ENCODE measurements at regions of chr2 and their contacts with region 1.

Region 1: GRCh38 chr2:101113396-101114267 is 37.5 kb downstream of the TBC1D8 start:
- DNase-seq: peak; percentile 50 to 63 (median 63)
- H3K4me3 ChIP-seq: peak overlapping the region in 1 of 3 experiments; percentile 22
- H3K4me3 Mint-ChIP-seq: peak overlapping the region in 1 of 2 donors; percentile 31
- H3K27ac ChIP-seq: peak overlapping the region; percentile 15 to 85
- H3K27ac Mint-ChIP-seq: peak overlapping the region; percentile 76 to 97 (median 91)
- H3K4me1 ChIP-seq: peaks cover 67 to 74% of the 10 kb centered on the region in 2 donors
- H3K4me1 Mint-ChIP-seq: peaks cover 76% of the 10 kb centered on the region
- H3K27me3 ChIP-seq: no peaks in the 10 kb centered on the region
- H3K27me3 Mint-ChIP-seq: no peaks in the 10 kb centered on the region
- CTCF ChIP-seq: no peak

Region 2: GRCh38 chr2:101173707-101174295 is 60.2 kb after region 1 on chr2:
- intact Hi-C with region 1: no loop called
- DNase-seq: peak; percentile 89 to 97 (median 95)
- H3K4me3 ChIP-seq: peak overlapping the region in 1 of 3 experiments; percentile 52
- H3K4me3 Mint-ChIP-seq: peak overlapping the region in 1 of 2 donors; percentile 73
- H3K27ac ChIP-seq: peak overlapping the region; percentile 80 to 84
- H3K27ac Mint-ChIP-seq: peak overlapping the region; percentile 75 to 94 (median 87)
- H3K4me1 ChIP-seq: peaks cover 66 to 75% of the 10 kb centered on the region in 2 donors
- H3K4me1 Mint-ChIP-seq: peaks cover 73% of the 10 kb centered on the region
- H3K27me3 ChIP-seq: no peaks in the 10 kb centered on the region
- H3K27me3 Mint-ChIP-seq: peaks cover 0 to 2% (median 0%) of the 10 kb centered on the region in 3 donors
- CTCF ChIP-seq: no peak

Region 3: DNA sequence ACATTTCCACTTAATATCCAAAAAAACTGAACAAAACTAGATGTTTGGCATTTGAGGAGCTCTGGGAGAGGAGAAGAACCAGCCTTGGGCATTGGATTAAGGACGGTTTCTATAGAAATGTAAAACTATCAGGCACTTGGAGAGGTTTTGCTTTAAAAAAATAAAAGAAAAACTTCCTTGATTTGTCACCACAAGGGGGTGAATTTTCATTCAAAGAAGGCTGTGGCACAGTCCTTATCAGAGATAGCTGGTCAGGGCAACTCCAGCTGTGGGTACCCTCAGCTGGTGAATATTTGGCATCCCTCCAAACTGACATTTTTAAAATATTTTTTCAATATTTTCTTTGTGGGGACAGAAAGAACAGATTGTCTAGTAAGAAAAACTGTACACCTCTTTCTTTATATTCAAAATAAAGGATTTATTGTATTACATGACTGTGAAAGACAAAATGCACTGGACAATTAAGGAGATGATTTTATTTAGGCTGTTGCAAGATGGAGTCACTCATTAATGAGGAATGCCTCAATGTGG is 83.6 kb after region 1 on chr2:
- intact Hi-C with region 1: loop called in 1 of 2 experiments (anchors 10 kb)
- DNase-seq: no peak
- H3K4me3 ChIP-seq: no peak overlapping the region
- H3K4me3 Mint-ChIP-seq: no peak overlapping the region
- H3K27ac ChIP-seq: no peak overlapping the region
- H3K27ac Mint-ChIP-seq: no peak overlapping the region
- H3K4me1 ChIP-seq: peaks cover 23 to 33% of the 10 kb centered on the region in 2 donors
- H3K4me1 Mint-ChIP-seq: peaks cover 36% of the 10 kb centered on the region
- H3K27me3 ChIP-seq: no peaks in the 10 kb centered on the region
- H3K27me3 Mint-ChIP-seq: peaks cover 0 to 3% (median 1%) of the 10 kb centered on the region in 3 donors
- CTCF ChIP-seq: peak; percentile 27

Measured in CD14-positive monocyte (primary cell).